Heart left ventricle (tissue), 16 donors: ENCODE measurements at regions of chr13 and their contacts with region 1.

Region 1: DNA sequence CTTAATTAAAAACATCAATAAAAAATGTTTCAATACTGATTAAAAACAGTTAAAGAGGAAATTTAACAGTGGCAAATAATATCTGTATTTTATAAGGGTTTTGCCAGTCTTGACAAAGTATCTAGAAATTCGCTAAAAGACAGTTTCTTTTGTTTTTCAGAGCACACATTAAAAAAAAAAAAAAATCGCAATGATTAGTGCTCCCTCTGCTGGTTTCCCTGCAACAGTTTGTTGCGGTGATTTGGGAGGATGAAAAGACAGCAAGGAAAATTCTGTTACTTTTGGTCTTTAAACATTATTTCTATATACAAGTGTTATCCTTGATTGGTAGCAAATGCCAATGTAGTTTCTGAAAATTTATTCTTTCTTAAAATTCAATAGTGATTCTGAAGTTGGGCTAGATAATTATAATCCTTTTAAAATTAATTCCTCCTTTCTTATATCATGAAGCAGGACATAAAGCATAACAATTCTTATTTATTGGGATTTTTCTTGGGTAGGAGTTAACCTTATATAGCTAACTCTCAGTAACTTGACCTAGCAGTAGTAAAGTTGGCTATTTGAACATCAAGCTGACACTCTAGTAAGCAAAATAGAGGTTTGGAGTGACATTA is 23.1 kb upstream of the SPRY2 start:
- DNase-seq: no peak
- ATAC-seq: no peak
- H3K4me3 ChIP-seq: peak overlapping the region in 8 of 12 donors; percentile 6 to 40 (median 29)
- H3K27ac ChIP-seq: peak overlapping the region in 3 of 12 donors; percentile 9 to 30 (median 16)
- H3K4me1 ChIP-seq: peaks cover 0 to 22% (median 8%) of the 10 kb centered on the region in 12 donors
- H3K27me3 ChIP-seq: no peaks in the 10 kb centered on the region
- CTCF ChIP-seq: peak; percentile 69 to 93 (median 84)
- POLR2A ChIP-seq: no peak

Region 2: DNA sequence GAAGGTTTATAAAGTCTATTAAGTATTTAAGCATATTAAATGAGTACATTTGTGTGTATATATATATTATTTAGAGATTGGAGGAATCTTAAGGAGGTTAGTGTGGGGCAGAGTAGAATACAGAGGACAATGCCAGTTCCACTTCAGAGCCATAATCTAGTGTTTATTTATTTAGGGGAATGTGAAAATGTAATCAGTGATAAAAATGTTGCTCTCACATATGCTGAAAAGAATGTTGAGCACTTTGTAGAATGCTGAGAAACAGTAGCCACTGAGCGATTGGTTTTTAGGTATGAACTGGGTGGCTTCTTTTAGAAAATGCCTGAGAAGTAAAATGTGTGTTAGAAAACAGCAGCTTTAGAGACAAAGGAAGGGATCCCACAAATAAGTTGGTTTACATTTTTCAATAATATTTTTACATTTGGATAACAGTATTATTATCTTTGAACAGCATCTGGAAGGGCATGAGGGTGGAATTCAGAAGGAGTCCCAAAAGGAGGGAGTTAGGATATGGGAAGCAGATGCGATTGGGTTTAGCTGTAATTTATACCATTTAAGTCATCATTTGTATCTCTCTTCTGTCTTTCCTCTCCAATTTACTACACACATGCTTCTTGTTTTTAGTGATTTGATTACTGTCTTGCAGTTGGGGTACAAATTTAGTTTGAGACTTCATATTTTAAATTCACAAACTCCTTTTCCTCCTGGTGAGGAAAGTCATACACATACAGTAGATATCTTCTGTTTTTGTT is 814.5 kb before region 1 on chr13:
- intact Hi-C with region 1: loop called in 1 of 10 experiments (anchors 10 kb)
- DNase-seq: no peak
- ATAC-seq: no peak
- H3K4me3 ChIP-seq: no peak overlapping the region
- H3K27ac ChIP-seq: no peak overlapping the region
- H3K4me1 ChIP-seq: peaks cover 0 to 9% (median 0%) of the 10 kb centered on the region in 12 donors
- H3K27me3 ChIP-seq: no peaks in the 10 kb centered on the region
- CTCF ChIP-seq: no peak
- POLR2A ChIP-seq: no peak

Region 3: GRCh38 chr13:79679334-79679733 is 684.7 kb before region 1 on chr13:
- intact Hi-C with region 1: loop called in 5 of 10 experiments (anchors 5 to 10 kb)
- DNase-seq: peak; percentile 58 to 75 (median 69)
- ATAC-seq: peak in 3 of 4 donors; percentile 56 to 80 (median 72)
- H3K4me3 ChIP-seq: no peak overlapping the region
- H3K27ac ChIP-seq: no peak overlapping the region
- H3K4me1 ChIP-seq: peaks cover 0 to 8% (median 1%) of the 10 kb centered on the region in 12 donors
- H3K27me3 ChIP-seq: no peaks in the 10 kb centered on the region
- CTCF ChIP-seq: peak; percentile 67 to 84 (median 78)
- POLR2A ChIP-seq: no peak

Region 4: DNA sequence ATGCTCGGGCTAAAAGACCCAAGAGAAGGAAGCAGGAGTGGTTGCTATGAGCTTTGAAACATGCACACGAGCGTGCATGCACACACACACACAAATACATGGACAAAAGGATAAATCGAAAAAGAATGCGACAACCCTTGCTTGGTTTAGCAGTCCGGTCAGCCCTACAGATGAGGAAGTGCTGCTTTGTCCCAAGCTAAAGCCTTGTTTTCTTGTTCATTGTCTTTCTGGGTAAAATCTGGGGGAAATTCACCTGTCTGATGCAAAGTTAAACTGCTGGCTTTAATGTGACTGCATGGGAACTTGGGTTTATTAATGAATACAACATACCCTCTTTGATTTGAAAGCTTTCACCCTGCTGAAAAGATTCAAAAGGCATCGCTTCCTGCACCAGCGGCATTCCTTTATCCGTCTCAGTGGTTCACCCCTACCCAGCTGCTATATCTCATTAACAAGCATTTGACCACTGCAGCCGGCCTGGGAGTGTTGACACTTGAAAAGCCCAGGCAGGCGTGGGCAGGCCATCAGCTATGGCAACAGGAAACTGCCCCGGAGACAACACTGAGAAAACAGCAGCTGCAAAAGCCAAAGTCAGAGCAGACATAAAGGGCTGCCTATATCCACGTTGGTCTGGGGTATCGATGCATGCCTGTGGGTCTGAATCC is 581.3 kb before region 1 on chr13:
- intact Hi-C with region 1: loop called in 6 of 10 experiments (anchors 5 to 10 kb)
- DNase-seq: peak; percentile 62 to 88 (median 73)
- ATAC-seq: peak; percentile 96 to 99 (median 98)
- H3K4me3 ChIP-seq: peak overlapping the region in 2 of 12 donors; percentile 12 to 15
- H3K27ac ChIP-seq: peak overlapping the region in 7 of 12 donors; percentile 9 to 47 (median 25)
- H3K4me1 ChIP-seq: peaks cover 0 to 29% (median 9%) of the 10 kb centered on the region in 12 donors
- H3K27me3 ChIP-seq: no peaks in the 10 kb centered on the region
- CTCF ChIP-seq: no peak
- POLR2A ChIP-seq: no peak

Region 5: GRCh38 chr13:80923907-80924306 is 559.9 kb after region 1 on chr13:
- intact Hi-C with region 1: loop called in 1 of 10 experiments (anchors 10 kb)
- DNase-seq: no peak
- ATAC-seq: peak in 3 of 4 donors; percentile 59 to 69 (median 61)
- H3K4me3 ChIP-seq: no peak overlapping the region
- H3K27ac ChIP-seq: peak overlapping the region in 9 of 12 donors; percentile 4 to 62 (median 46)
- H3K4me1 ChIP-seq: peaks cover 0 to 14% (median 1%) of the 10 kb centered on the region in 12 donors
- H3K27me3 ChIP-seq: no peaks in the 10 kb centered on the region
- CTCF ChIP-seq: peak in 9 of 12 donors; percentile 11 to 47 (median 32)
- POLR2A ChIP-seq: no peak